Activated naive CD4-positive, alpha-beta T cell treated with anti-CD3 and anti-CD28 coated beads for 36 hours (primary cell): ENCODE measurements at regions of chr2 and their contacts with region 1.

Region 1: DNA sequence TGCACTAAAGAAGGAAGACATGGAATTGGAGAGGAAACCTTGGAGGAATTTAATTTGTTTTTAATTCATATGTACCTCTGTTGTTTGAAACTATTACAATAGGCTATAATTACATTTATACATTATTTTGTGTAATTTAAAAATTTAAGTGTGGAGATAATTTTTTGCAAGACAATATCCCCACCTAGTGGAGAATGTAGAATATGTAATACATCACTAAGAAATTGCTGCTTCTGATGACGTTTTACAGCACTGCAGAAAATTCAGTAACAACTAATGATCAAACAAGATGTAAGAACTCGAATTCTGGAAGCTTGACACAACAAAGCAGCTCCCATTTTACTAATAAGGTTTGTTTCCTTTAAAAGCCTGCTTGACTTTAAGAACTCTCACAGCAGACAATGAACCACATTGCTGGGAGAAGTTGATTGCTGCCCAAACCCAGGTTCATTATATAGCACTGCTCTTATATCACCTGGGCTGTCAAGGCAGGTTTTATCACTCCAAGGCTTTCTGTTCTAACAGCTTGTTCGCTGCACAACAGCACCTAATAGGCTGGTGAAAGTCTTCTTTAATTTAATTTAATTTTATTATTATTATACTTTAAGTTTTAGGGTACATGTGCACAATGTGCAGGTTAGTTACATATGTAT is 53.4 kb downstream of the THADA start:
- DNase-seq: no peak
- H3K4me3 Mint-ChIP-seq: no peak overlapping the region
- H3K27ac Mint-ChIP-seq: no peak overlapping the region
- H3K4me1 Mint-ChIP-seq: peaks cover 11% of the 10 kb centered on the region
- H3K27me3 Mint-ChIP-seq: no peaks in the 10 kb centered on the region

Region 2: DNA sequence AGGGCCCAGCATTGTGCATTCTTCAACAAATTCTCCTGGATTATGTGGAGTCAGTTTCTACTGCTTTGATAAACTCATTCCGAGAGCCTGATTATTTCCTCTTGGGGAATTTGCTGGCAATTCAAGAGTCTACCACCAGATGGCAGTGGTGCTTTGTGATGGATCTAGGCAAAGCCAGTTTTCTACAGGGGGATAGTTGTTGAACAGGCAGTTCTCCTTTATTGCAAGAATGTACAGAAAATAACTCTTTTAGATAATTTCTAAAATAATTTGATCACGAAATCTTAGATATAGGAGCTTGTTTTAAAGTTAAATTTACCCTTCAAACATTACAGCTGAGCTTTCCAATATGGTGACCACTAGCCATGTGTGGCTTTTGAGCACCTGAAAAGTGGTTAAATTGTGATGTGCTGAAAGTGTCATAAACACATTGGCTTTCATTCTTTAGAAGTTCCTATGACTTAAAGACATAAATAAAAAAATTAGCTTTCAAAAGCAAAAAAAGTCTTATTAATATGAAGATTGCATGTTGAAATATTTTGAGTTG is 683.3 kb before region 1 on chr2:
- CTCF ChIA-PET with region 1: interaction called, 3 read pairs
- intact Hi-C with region 1: loop called (anchors 1 kb)
- DNase-seq: peak; percentile 91
- H3K4me3 Mint-ChIP-seq: no peak overlapping the region
- H3K27ac Mint-ChIP-seq: no peak overlapping the region
- H3K4me1 Mint-ChIP-seq: peaks cover 12% of the 10 kb centered on the region
- H3K27me3 Mint-ChIP-seq: no peaks in the 10 kb centered on the region

Region 3: DNA sequence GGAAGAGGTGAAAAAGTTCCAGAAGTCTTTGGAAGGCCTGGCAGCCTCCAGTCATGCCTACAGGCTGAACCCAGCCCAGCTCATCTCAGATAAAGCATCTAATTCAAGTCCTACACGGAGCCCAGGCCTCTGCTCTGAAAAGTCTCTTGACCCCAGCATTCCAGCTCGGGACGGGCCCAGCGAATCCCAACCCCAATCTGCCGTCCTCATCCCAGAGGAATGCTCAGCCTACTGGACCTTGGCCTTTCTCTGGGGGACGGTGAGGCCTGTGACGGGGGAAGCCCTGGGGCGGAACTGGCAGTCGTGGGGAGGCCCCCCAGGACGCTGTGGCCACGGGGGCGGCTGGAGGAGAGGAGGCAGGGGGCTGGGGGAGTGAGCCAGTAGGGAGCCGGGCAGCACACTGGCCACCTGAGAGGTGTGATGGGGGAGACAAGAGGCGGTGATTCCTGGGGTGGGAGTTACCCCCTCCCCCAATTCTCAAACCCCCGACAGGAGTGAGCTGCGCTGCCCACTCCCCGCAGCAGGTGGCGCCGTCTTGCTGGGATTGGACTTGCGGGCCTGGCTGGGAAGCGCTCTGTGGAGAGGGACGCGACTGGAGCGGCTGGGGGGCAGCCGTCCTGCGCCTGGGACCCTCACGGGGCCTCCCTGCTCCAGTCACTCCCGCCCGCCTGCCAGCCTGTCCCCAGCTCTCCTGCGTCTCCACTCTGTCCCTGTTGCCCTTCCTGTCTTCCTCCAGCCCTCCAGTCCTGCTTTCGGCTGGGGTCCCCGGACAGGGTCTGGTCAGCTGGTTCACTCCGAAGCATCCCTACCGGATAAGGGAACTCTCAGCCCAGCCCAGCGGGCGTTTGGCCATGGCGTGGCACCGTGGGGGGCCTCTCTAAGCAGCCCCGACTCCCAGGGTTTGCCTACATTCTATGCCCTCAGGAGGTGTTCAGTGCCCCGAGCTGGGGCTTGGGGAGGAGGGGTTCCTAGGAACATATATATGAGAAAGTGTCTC is 567.4 kb before region 1 on chr2:
- CTCF ChIA-PET with region 1: interaction called, 3 read pairs
- intact Hi-C with region 1: loop called (anchors 1 kb)
- DNase-seq: peak; percentile 69
- H3K4me3 Mint-ChIP-seq: no peak overlapping the region
- H3K27ac Mint-ChIP-seq: no peak overlapping the region
- H3K4me1 Mint-ChIP-seq: peaks cover 13% of the 10 kb centered on the region
- H3K27me3 Mint-ChIP-seq: no peaks in the 10 kb centered on the region

Region 4: DNA sequence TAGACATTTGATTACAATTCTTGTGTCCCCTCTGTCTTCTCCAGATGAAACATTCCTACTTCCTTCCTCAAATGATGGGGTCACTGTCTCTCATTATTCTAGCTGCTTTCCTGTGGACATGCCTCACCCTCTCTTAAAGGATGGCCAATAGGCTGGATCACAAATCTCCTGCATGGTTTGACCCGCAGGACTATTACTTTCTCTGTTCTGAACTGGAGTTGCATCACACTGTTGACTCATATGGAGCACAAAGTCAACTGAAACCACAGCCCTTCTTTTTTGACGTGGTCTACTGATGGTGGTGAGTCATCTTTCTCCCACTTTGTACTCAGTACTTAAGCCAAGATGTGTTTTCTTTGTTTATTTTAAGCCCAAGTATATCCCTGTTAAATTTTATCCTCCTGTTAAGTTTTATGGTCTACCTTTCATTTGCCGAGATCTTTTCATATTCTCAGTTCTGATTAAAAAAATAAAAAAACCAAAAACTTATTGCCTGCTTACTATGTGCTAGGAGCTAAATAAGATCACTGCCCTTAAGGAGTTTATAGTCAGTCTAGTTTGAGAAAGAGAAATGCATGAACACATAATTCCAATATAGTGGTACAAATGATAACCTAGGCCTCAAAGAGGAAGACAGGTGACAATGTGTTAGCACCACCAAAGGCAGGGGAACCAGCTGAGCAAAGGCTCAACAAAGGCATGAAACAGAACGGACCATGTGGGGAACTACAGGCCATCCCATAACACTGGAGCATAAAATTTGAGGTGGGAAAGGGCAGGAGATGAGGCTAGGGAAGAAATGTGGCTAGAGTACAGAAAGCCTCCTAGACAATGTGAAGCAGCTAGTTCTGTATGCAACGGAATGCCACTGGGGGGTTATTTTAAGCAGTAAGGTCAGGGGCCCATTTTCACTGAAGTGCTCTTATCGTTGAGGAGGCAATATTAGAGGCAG is 248.4 kb before region 1 on chr2:
- CTCF ChIA-PET with region 1: no interaction called
- intact Hi-C with region 1: loop called (anchors 5 kb)
- DNase-seq: peak; percentile 77
- H3K4me3 Mint-ChIP-seq: no peak overlapping the region
- H3K27ac Mint-ChIP-seq: peak overlapping the region; percentile 81
- H3K4me1 Mint-ChIP-seq: peaks cover 29% of the 10 kb centered on the region
- H3K27me3 Mint-ChIP-seq: no peaks in the 10 kb centered on the region

Region 5: GRCh38 chr2:43521568-43521967 is 20.8 kb before region 1 on chr2:
- CTCF ChIA-PET with region 1: interaction called, 10 read pairs
- intact Hi-C with region 1: no loop called
- DNase-seq: no peak
- H3K4me3 Mint-ChIP-seq: no peak overlapping the region
- H3K27ac Mint-ChIP-seq: no peak overlapping the region
- H3K4me1 Mint-ChIP-seq: peaks cover 12% of the 10 kb centered on the region
- H3K27me3 Mint-ChIP-seq: no peaks in the 10 kb centered on the region

Region 6: DNA sequence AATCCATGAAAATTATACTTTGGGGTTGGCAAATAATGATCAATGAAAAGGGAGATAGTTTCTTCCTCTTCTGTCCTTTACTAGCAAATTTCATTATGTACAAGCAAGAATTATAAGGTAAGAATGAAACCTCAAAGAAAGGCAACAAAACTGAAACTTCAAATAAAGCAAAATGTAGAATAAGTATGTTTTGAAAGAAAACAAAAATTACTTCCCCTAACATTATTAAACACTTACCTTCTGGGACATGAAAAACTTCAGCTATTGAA is 24.0 kb after region 1 on chr2:
- CTCF ChIA-PET with region 1: no interaction called
- intact Hi-C with region 1: no loop called
- DNase-seq: no peak
- H3K4me3 Mint-ChIP-seq: no peak overlapping the region
- H3K27ac Mint-ChIP-seq: no peak overlapping the region
- H3K4me1 Mint-ChIP-seq: peaks cover 51% of the 10 kb centered on the region
- H3K27me3 Mint-ChIP-seq: no peaks in the 10 kb centered on the region